CD8-positive, alpha-beta memory T cell (primary cell): ENCODE measurements at regions of chr17 and their contacts with region 1.

Region 1: DNA sequence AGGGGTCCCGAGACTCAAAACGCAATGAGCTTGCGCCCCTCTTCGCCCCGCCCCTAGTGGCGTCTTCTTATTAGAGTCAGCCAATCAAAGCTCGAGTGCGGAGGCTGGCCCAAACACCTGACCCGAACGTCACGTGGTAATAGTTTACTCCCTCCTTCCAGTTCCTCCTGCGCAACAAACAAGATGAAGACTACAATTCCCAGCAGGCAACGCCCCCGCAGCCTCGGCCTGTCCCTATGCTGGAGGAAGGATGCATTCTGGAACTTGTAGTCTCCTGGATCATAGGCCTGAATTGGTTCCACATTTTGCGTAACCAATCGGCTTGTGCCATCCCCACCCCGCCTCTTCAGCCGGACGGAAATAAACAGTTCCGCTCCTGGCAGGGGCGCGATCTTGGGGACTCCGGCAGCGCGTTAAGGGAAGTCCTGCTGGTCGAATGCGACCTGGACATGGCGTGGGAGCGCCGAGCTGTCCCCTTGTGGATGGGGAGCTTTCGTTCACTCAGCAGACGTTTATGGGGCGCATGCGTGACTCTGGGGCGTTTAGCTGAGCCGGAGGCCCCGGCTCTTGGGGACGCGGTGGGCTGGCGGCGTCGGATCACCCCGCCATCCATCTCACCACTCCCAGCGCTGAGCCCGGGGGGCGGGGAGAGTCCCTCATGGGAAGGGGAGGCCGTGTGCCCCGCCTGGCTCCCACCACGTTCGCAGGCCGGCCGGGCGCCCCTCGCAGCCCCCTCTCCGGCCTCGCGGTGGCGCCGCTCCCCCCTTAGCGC is at the start of gene WBP2:
- DNase-seq: peak; percentile 94 to 99 (median 98)
- H3K4me3 ChIP-seq: peak within 1 kb of the TSS; percentile 91
- H3K4me3 Mint-ChIP-seq: peak within 1 kb of the TSS in 1 of 7 donors; percentile 92
- H3K27ac ChIP-seq: peak within 1 kb of the TSS; percentile 89
- H3K27ac Mint-ChIP-seq: peak within 1 kb of the TSS in 7 of 8 donors; percentile 83 to 93 (median 88)
- H3K4me1 ChIP-seq: peaks cover 22% of the 10 kb centered on the region
- H3K4me1 Mint-ChIP-seq: peaks cover 21 to 37% (median 21%) of the 10 kb centered on the region in 3 donors
- H3K27me3 ChIP-seq: no peaks in the 10 kb centered on the region
- H3K27me3 Mint-ChIP-seq: no peaks in the 10 kb centered on the region
- total RNA-seq, gene WBP2: 47.5 to 53.2 TPM

Region 2: GRCh38 chr17:75779231-75779986 is 76.1 kb before region 1 on chr17:
- CTCF ChIA-PET with region 1: interaction called, 32 read pairs
- POLR2A ChIA-PET with region 1: interaction called, 49 read pairs
- DNase-seq: peak; percentile 84 to 98 (median 95)
- H3K4me3 ChIP-seq: peak overlapping the region; percentile 86
- H3K4me3 Mint-ChIP-seq: peak overlapping the region; percentile 93 to 100 (median 98)
- H3K27ac ChIP-seq: peak overlapping the region; percentile 97
- H3K27ac Mint-ChIP-seq: peak overlapping the region; percentile 93 to 100 (median 98)
- H3K4me1 ChIP-seq: peaks cover 40% of the 10 kb centered on the region
- H3K4me1 Mint-ChIP-seq: peaks cover 51 to 69% (median 59%) of the 10 kb centered on the region in 3 donors
- H3K27me3 ChIP-seq: no peaks in the 10 kb centered on the region
- H3K27me3 Mint-ChIP-seq: peaks cover 0 to 16% of the 10 kb centered on the region in 2 donors

Region 3: GRCh38 chr17:75827252-75828115 is 28.0 kb before region 1 on chr17:
- CTCF ChIA-PET with region 1: interaction called, 4 read pairs
- POLR2A ChIA-PET with region 1: interaction called, 12 read pairs
- DNase-seq: peak; percentile 58 to 83 (median 72)
- H3K4me3 ChIP-seq: peak overlapping the region; percentile 26
- H3K4me3 Mint-ChIP-seq: peak overlapping the region; percentile 62 to 85 (median 65)
- H3K27ac ChIP-seq: peak overlapping the region; percentile 57
- H3K27ac Mint-ChIP-seq: peak overlapping the region; percentile 61 to 100 (median 94)
- H3K4me1 ChIP-seq: peaks cover 17% of the 10 kb centered on the region
- H3K4me1 Mint-ChIP-seq: peaks cover 15 to 22% (median 19%) of the 10 kb centered on the region in 3 donors
- H3K27me3 ChIP-seq: no peaks in the 10 kb centered on the region
- H3K27me3 Mint-ChIP-seq: no peaks in the 10 kb centered on the region

Region 4: GRCh38 chr17:75872434-75873351 is 17.2 kb after region 1 on chr17:
- CTCF ChIA-PET with region 1: interaction called, 46 read pairs
- POLR2A ChIA-PET with region 1: interaction called, 82 read pairs
- DNase-seq: peak; percentile 29 to 82 (median 51)
- H3K4me3 ChIP-seq: no peak overlapping the region
- H3K4me3 Mint-ChIP-seq: peak overlapping the region; percentile 4 to 85 (median 47)
- H3K27ac ChIP-seq: peak overlapping the region; percentile 71
- H3K27ac Mint-ChIP-seq: peak overlapping the region; percentile 76 to 98 (median 93)
- H3K4me1 ChIP-seq: peaks cover 41% of the 10 kb centered on the region
- H3K4me1 Mint-ChIP-seq: peaks cover 29 to 50% (median 32%) of the 10 kb centered on the region in 3 donors
- H3K27me3 ChIP-seq: no peaks in the 10 kb centered on the region
- H3K27me3 Mint-ChIP-seq: no peaks in the 10 kb centered on the region

Region 5: DNA sequence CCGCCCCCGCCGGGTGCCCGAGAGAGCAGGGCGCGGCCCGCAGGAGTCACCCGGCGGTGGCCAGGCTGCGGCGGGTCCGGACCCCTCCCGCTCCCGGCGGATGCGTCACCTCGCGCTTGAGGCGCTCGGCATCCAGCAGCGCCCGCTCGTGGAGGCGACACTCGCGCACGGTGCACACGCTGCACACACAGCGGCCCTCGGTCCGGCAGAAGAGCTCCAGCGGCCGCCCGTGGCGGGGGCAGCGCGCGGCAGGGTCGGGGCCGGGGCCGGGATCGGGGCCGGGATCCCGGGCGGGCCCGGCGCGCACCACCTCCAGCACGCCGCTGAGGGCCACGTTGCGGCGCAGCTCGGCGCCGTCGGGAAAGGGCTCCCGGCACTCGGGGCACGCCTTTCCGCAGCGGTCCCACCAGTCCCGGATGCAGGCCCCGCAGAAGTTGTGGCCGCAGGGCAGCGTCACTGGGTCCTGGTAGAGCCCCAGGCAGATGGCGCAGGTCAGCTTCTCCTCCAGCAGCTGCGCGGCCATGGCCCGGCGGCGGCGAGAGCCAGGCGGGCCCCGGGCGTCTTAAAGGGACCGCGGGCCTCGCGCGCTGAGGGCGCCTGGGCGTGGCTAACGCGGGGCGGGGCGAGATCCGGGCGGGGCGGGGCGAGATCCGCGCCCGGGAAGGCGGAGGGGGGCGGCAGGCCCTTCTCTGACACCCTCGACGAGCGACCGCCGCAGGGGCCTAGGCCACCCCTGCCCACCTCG is 41.1 kb after region 1 on chr17 and contains the start of gene TRIM65:
- CTCF ChIA-PET with region 1: interaction called, 42 read pairs
- POLR2A ChIA-PET with region 1: interaction called, 42 read pairs
- DNase-seq: peak; percentile 67 to 84 (median 71)
- H3K4me3 ChIP-seq: peak within 1 kb of the TSS; percentile 66
- H3K4me3 Mint-ChIP-seq: peak within 1 kb of the TSS; percentile 82 to 92 (median 85)
- H3K27ac ChIP-seq: peak within 1 kb of the TSS; percentile 61
- H3K27ac Mint-ChIP-seq: peak within 1 kb of the TSS; percentile 67 to 97 (median 85)
- H3K4me1 ChIP-seq: peaks cover 18% of the 10 kb centered on the region
- H3K4me1 Mint-ChIP-seq: peaks cover 25 to 31% (median 26%) of the 10 kb centered on the region in 3 donors
- H3K27me3 ChIP-seq: no peaks in the 10 kb centered on the region
- H3K27me3 Mint-ChIP-seq: no peaks in the 10 kb centered on the region
- total RNA-seq, gene TRIM65: 34.9 to 35.4 TPM